MCF 10A (cell line): ENCODE measurements at regions of chr9 and their contacts with region 1.

Region 1: GRCh38 chr9:111597817-111598729 is 1.4 kb downstream of the PTGR1 start:
- DNase-seq: peak; percentile 74
- H3K4me3 Mint-ChIP-seq: peak overlapping the region; percentile 83
- H3K27ac Mint-ChIP-seq: peak overlapping the region; percentile 75
- H3K4me1 Mint-ChIP-seq: peaks cover 11% of the 10 kb centered on the region
- H3K27me3 Mint-ChIP-seq: no peaks in the 10 kb centered on the region
- CTCF ChIP-seq: peak; percentile 70

Region 2: GRCh38 chr9:111572950-111573604 is 25.0 kb before region 1 on chr9:
- CTCF ChIA-PET with region 1: no interaction called
- POLR2A ChIA-PET with region 1: no interaction called
- intact Hi-C with region 1: no loop called
- DNase-seq: no peak
- H3K4me3 Mint-ChIP-seq: no peak overlapping the region
- H3K27ac Mint-ChIP-seq: no peak overlapping the region
- H3K4me1 Mint-ChIP-seq: no peaks in the 10 kb centered on the region
- H3K27me3 Mint-ChIP-seq: no peaks in the 10 kb centered on the region
- CTCF ChIP-seq: no peak

Region 3: DNA sequence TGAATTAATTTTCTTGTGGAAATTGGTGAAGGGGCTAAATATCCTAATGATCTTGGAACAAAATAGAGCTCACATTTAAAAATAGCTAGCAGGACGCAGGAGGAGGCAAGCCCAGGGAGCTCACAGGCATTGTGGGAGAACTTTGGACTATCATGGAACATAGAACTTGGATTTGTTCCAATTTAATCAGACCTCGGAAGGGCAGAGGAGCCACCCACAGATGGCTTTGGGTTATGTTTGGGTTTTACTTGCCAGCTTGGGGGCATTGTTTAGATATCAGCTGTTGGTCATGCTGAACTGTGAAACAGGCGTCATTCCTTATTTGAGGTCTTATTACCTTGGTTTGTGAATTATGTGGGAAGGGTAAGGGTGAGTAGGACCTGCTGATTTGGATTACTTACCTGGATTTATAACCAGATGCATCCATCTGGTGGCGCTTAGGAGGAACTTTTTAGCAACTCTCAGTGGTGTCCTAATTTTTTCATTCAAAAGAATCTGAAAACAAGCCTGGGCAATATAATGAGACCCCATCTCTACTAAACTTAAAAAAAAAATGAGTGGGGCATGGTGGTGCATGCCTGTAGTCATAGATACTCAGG is 15.5 kb after region 1 on chr9:
- CTCF ChIA-PET with region 1: interaction called, 30 read pairs
- POLR2A ChIA-PET with region 1: interaction called, 4 read pairs
- intact Hi-C with region 1: no loop called
- DNase-seq: peak; percentile 13
- H3K4me3 Mint-ChIP-seq: no peak overlapping the region
- H3K27ac Mint-ChIP-seq: no peak overlapping the region
- H3K4me1 Mint-ChIP-seq: peaks cover 7% of the 10 kb centered on the region
- H3K27me3 Mint-ChIP-seq: peaks cover 12% of the 10 kb centered on the region
- CTCF ChIP-seq: no peak

Region 4: GRCh38 chr9:111631071-111631971 is 33.2 kb after region 1 on chr9 and contains the start of gene DNAJC25:
- CTCF ChIA-PET with region 1: interaction called, 14 read pairs
- POLR2A ChIA-PET with region 1: interaction called, 88 read pairs
- intact Hi-C with region 1: loop called (anchors 2 kb)
- DNase-seq: peak; percentile 98
- H3K4me3 Mint-ChIP-seq: peak within 1 kb of the TSS; percentile 99
- H3K27ac Mint-ChIP-seq: peak within 1 kb of the TSS; percentile 82
- H3K4me1 Mint-ChIP-seq: peaks cover 37% of the 10 kb centered on the region
- H3K27me3 Mint-ChIP-seq: no peaks in the 10 kb centered on the region
- CTCF ChIP-seq: no peak
- total RNA-seq, gene DNAJC25: 10.9 and 11.6 TPM in 2 replicates

Region 5: DNA sequence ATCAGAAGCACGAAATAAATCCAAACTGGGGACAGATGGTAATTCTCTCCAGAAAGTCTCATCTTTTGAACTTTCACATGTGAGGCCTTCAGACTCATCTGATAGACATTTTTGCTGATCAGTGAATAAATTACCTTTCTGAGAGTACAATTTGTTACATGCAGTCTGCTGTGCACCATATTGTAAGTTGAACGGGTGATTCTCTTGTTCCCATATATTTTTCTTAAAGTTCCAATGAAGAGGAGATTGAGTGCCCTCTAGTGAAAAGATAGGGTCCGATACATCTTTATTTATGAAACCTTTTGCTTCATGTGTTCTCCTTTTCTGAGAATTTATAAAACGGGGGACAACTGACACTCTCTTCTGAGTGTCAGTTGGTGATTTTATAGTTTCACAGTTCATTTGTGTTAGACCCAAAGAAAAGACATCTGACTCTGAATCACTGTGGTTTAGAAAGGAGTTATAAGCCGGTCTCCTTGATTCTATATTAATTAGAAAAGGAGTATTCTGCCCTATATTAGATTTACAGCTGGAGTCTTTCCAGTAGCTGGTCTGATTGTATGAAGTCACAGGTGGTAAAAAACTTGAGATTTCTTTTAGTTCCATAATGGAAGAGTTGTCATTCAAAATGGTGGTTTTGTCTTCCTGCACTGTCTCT is 93.7 kb after region 1 on chr9:
- CTCF ChIA-PET with region 1: interaction called, 35 read pairs
- POLR2A ChIA-PET with region 1: interaction called, 32 read pairs
- intact Hi-C with region 1: loop called (anchors 1 kb)
- DNase-seq: peak; percentile 52
- H3K4me3 Mint-ChIP-seq: no peak overlapping the region
- H3K27ac Mint-ChIP-seq: peak overlapping the region; percentile 27
- H3K4me1 Mint-ChIP-seq: no peaks in the 10 kb centered on the region
- H3K27me3 Mint-ChIP-seq: no peaks in the 10 kb centered on the region
- CTCF ChIP-seq: peak; percentile 29

Region 6: DNA sequence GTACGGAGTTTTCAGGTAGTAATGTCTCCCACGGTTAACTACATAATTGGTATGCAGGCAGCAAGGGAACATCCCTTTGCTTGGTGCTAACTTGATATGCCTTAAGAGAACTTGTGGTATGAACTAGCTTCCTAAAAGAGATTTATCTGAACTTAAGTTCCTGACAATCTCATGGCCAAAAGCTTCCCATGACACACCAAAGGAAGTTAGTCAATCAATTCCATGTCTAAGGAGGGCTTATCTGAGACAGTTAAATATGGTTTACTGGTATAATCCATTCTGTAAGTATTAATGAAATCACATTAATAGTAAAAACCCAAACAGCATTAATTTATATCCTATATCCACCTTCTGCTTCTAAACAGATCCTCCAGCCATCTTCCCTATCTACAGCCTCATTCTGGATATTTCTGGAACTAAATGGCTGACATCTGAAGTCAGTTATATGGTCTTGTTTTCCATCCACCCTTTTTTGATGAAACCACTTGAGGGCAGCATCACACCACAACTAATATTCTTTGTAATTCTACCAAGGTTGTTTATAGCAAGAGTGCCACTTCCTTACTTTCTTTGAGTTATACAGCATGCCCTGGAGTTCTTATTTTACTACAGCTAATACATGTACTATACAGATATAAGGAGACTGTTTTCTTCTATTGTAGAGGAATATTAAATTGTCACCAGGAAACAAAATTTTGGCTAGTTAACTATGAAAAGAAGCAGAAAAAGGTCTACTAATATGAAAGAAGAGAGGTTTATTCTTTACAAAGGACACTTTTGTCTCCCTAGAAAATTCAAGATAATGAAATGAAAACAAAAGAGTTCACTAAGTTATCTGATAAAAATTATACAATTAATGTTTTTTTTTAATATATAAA is 161.9 kb after region 1 on chr9:
- CTCF ChIA-PET with region 1: interaction called, 10 read pairs
- POLR2A ChIA-PET with region 1: interaction called, 5 read pairs
- intact Hi-C with region 1: loop called (anchors 1 kb)
- DNase-seq: peak; percentile 85
- H3K4me3 Mint-ChIP-seq: no peak overlapping the region
- H3K27ac Mint-ChIP-seq: peak overlapping the region; percentile 87
- H3K4me1 Mint-ChIP-seq: peaks cover 8% of the 10 kb centered on the region
- H3K27me3 Mint-ChIP-seq: no peaks in the 10 kb centered on the region
- CTCF ChIP-seq: peak; percentile 68

Region 7: GRCh38 chr9:112074250-112075008 is 476.4 kb after region 1 on chr9:
- CTCF ChIA-PET with region 1: interaction called, 9 read pairs
- POLR2A ChIA-PET with region 1: interaction called, 3 read pairs
- intact Hi-C with region 1: loop called (anchors 2 kb)
- DNase-seq: peak; percentile 87
- H3K4me3 Mint-ChIP-seq: no peak overlapping the region
- H3K27ac Mint-ChIP-seq: peak overlapping the region; percentile 83
- H3K4me1 Mint-ChIP-seq: peaks cover 15% of the 10 kb centered on the region
- H3K27me3 Mint-ChIP-seq: no peaks in the 10 kb centered on the region
- CTCF ChIP-seq: peak; percentile 90